Caco-2 (cell line): ENCODE measurements at regions of chr10 and their contacts with region 1.

Region 1: DNA sequence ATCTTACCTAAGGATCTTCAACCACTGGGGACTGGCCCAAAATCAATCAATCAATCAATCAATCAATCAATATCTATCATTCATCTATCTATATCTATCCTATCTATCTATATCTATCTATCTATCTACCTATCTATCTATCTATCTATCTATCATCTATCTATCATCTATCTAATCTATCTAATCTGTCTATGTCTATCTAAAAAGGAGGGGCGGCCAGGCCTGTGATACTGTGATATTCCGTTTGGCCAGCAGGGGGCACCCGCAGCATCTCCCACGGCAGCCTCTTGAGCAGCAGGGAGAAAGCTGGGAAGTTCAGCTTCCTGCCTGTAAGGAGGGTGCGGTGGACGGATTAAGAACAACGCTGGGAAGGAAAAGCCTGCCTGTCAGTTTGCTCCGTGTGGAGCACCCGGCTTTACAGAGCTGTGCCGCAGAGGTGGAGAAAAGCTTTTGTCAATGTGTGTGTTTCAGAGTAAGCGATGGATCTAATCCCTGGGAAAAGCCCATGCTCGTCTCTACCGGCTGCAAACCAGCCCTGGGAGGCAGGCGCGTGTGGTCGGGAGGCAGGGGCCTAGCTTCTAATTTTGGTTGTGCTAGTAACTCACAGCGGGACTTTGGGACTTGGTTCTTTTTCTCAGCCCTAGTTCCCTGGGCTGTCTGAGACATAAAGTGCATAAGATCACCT is 125.0 kb downstream of the SH2D4B start:
- DNase-seq: peak; percentile 83 to 87
- H3K4me3 ChIP-seq: no peak overlapping the region
- H3K4me3 Mint-ChIP-seq: peak overlapping the region; percentile 24
- H3K27ac Mint-ChIP-seq: no peak overlapping the region
- H3K4me1 ChIP-seq: peaks cover 9% of the 10 kb centered on the region
- H3K4me1 Mint-ChIP-seq: peaks cover 7% of the 10 kb centered on the region
- H3K27me3 ChIP-seq: no peaks in the 10 kb centered on the region
- H3K27me3 Mint-ChIP-seq: no peaks in the 10 kb centered on the region
- CTCF ChIP-seq: peak; percentile 86 to 89

Region 2: GRCh38 chr10:80382989-80383388 is 279.7 kb before region 1 on chr10:
- CTCF ChIA-PET with region 1: interaction called, 10 read pairs
- POLR2A ChIA-PET with region 1: no interaction called
- intact Hi-C with region 1: loop called (anchors 10 kb)
- DNase-seq: peak; percentile 43 to 52
- H3K4me3 ChIP-seq: no peak overlapping the region
- H3K4me3 Mint-ChIP-seq: no peak overlapping the region
- H3K27ac Mint-ChIP-seq: no peak overlapping the region
- H3K4me1 ChIP-seq: no peaks in the 10 kb centered on the region
- H3K4me1 Mint-ChIP-seq: peaks cover 5% of the 10 kb centered on the region
- H3K27me3 ChIP-seq: no peaks in the 10 kb centered on the region
- H3K27me3 Mint-ChIP-seq: peaks cover 3% of the 10 kb centered on the region
- CTCF ChIP-seq: peak; percentile 50 to 61

Region 3: GRCh38 chr10:80535671-80536365 is 126.9 kb before region 1 on chr10:
- CTCF ChIA-PET with region 1: no interaction called
- POLR2A ChIA-PET with region 1: no interaction called
- intact Hi-C with region 1: loop called (anchors 1 kb)
- DNase-seq: peak; percentile 80 to 86
- H3K4me3 ChIP-seq: peak overlapping the region; percentile 63
- H3K4me3 Mint-ChIP-seq: peak overlapping the region; percentile 81
- H3K27ac Mint-ChIP-seq: peak overlapping the region; percentile 93
- H3K4me1 ChIP-seq: peaks cover 4% of the 10 kb centered on the region; the same call in 1 of the 2 replicates
- H3K4me1 Mint-ChIP-seq: no peaks in the 10 kb centered on the region
- H3K27me3 ChIP-seq: no peaks in the 10 kb centered on the region
- H3K27me3 Mint-ChIP-seq: no peaks in the 10 kb centered on the region
- CTCF ChIP-seq: peak; percentile 72 to 94

Region 4: GRCh38 chr10:80632742-80633141 is 30.0 kb before region 1 on chr10:
- CTCF ChIA-PET with region 1: no interaction called
- POLR2A ChIA-PET with region 1: no interaction called
- intact Hi-C with region 1: no loop called
- DNase-seq: no peak
- H3K4me3 ChIP-seq: no peak overlapping the region
- H3K4me3 Mint-ChIP-seq: no peak overlapping the region
- H3K27ac Mint-ChIP-seq: no peak overlapping the region
- H3K4me1 ChIP-seq: no peaks in the 10 kb centered on the region
- H3K4me1 Mint-ChIP-seq: no peaks in the 10 kb centered on the region
- H3K27me3 ChIP-seq: no peaks in the 10 kb centered on the region
- H3K27me3 Mint-ChIP-seq: peaks cover 10% of the 10 kb centered on the region
- CTCF ChIP-seq: no peak

Region 5: GRCh38 chr10:80699602-80700039 is 36.9 kb after region 1 on chr10:
- CTCF ChIA-PET with region 1: interaction called, 8 read pairs
- POLR2A ChIA-PET with region 1: no interaction called
- intact Hi-C with region 1: loop called (anchors 1 kb)
- DNase-seq: peak; percentile 83 to 90
- H3K4me3 ChIP-seq: no peak overlapping the region
- H3K4me3 Mint-ChIP-seq: no peak overlapping the region
- H3K27ac Mint-ChIP-seq: no peak overlapping the region
- H3K4me1 ChIP-seq: no peaks in the 10 kb centered on the region
- H3K4me1 Mint-ChIP-seq: peaks cover 8% of the 10 kb centered on the region
- H3K27me3 ChIP-seq: no peaks in the 10 kb centered on the region
- H3K27me3 Mint-ChIP-seq: no peaks in the 10 kb centered on the region
- CTCF ChIP-seq: peak; percentile 90 to 94

Region 6: GRCh38 chr10:80861882-80862281 is 199.2 kb after region 1 on chr10:
- CTCF ChIA-PET with region 1: no interaction called
- POLR2A ChIA-PET with region 1: no interaction called
- intact Hi-C with region 1: loop called (anchors 1 kb)
- DNase-seq: no peak
- H3K4me3 ChIP-seq: no peak overlapping the region
- H3K4me3 Mint-ChIP-seq: no peak overlapping the region
- H3K27ac Mint-ChIP-seq: no peak overlapping the region
- H3K4me1 ChIP-seq: no peaks in the 10 kb centered on the region
- H3K4me1 Mint-ChIP-seq: no peaks in the 10 kb centered on the region
- H3K27me3 ChIP-seq: no peaks in the 10 kb centered on the region
- H3K27me3 Mint-ChIP-seq: peaks cover 7% of the 10 kb centered on the region
- CTCF ChIP-seq: peak; percentile 23 to 51

Region 7: DNA sequence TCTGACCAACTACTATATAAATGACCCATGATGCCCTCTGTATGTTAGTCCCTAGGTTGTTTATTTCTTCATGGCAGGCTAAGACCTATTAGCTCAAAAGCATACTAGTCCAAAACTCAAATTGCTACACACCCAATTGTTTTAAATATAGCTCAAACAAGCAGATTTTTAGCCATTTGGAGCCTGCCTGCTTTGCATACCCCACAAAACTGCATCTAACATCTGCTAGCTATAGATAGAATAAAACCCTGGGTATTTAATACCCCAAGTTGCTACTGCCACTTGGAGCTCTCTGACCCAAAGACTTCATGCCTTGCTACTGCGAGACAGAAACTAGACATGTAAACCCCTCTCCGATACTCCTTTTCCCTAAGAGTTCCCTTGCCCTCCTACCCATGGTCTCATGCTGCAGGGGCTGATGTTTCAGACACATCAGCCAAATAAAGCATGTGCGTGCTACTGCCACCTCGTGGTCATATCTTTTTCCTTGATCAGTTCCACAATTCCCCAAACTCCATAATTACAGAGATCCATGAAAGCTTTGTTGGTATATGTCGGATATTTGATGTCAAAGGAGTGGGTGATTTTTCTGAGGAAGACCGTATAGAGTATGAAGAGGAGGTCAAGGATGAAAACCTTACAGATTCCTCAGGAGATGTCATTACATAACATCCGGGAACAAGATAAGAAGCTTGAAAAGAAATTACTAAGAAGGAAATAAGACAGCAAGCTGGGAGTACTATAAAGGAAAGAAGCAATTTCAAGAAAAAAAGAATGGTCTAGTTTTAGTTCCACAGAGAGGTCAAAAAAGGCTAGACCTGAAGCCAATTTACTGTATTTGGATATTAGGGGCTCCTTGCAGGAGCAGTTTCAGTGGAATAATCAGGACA is 261.6 kb after region 1 on chr10:
- CTCF ChIA-PET with region 1: interaction called, 17 read pairs
- POLR2A ChIA-PET with region 1: no interaction called
- intact Hi-C with region 1: loop called (anchors 1 kb)
- DNase-seq: peak; percentile 46 to 66
- H3K4me3 ChIP-seq: no peak overlapping the region
- H3K4me3 Mint-ChIP-seq: no peak overlapping the region
- H3K27ac Mint-ChIP-seq: no peak overlapping the region
- H3K4me1 ChIP-seq: no peaks in the 10 kb centered on the region
- H3K4me1 Mint-ChIP-seq: no peaks in the 10 kb centered on the region
- H3K27me3 ChIP-seq: no peaks in the 10 kb centered on the region
- H3K27me3 Mint-ChIP-seq: peaks cover 14% of the 10 kb centered on the region
- CTCF ChIP-seq: peak; percentile 52 to 75

Region 8: GRCh38 chr10:81018708-81019365 is 356.1 kb after region 1 on chr10:
- CTCF ChIA-PET with region 1: no interaction called
- POLR2A ChIA-PET with region 1: no interaction called
- intact Hi-C with region 1: loop called (anchors 1 kb)
- DNase-seq: peak; percentile 46 to 52
- H3K4me3 ChIP-seq: no peak overlapping the region
- H3K4me3 Mint-ChIP-seq: no peak overlapping the region
- H3K27ac Mint-ChIP-seq: no peak overlapping the region
- H3K4me1 ChIP-seq: no peaks in the 10 kb centered on the region
- H3K4me1 Mint-ChIP-seq: no peaks in the 10 kb centered on the region
- H3K27me3 ChIP-seq: no peaks in the 10 kb centered on the region
- H3K27me3 Mint-ChIP-seq: peaks cover 3% of the 10 kb centered on the region
- CTCF ChIP-seq: peak; percentile 72 to 82